ENCODE measurements at regions of chr7 and their contacts with region 1.

Region 1: GRCh38 chr7:87152107-87152844 is at the start of gene DMTF1:
- DNase-seq: peak; percentile 94
- ATAC-seq: peak; percentile 83
- H3K4me3 ChIP-seq: peak within 1 kb of the TSS; percentile 75 to 97 (median 88)
- H3K4me3 Mint-ChIP-seq: peak within 1 kb of the TSS; percentile 88
- H3K27ac ChIP-seq: peak within 1 kb of the TSS; percentile 87 to 99
- H3K27ac Mint-ChIP-seq: peak within 1 kb of the TSS; percentile 91
- H3K4me1 ChIP-seq: peaks cover 27 to 45% of the 10 kb centered on the region in 2 donors
- H3K4me1 Mint-ChIP-seq: peaks cover 46% of the 10 kb centered on the region
- H3K27me3 ChIP-seq: no peaks in the 10 kb centered on the region
- H3K27me3 Mint-ChIP-seq: no peaks in the 10 kb centered on the region
- CTCF ChIP-seq: no peak
- total RNA-seq, gene DMTF1: 235 and 264 TPM in 2 replicates

Region 2: DNA sequence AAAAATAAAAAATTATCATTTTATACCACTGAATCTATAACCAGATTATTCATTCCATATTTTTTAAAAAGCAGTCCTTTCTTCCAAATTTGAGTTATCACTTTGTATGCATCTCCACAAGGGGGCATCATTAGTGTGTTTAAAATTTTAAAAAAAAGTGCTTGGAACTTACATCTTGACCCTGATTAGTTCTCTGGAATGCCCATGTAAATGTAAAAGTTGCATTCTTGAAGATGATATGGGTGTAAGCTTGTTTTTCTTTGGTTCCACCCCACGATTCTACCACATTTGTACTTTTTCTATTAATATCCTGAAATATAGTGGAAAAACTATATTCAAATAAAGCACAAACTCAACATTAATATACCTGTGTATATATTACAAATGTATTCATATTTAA is 237.7 kb before region 1 on chr7:
- CTCF ChIA-PET with region 1: interaction called, 12 read pairs
- POLR2A ChIA-PET with region 1: no interaction called
- intact Hi-C with region 1: no loop called
- DNase-seq: peak; percentile 17
- ATAC-seq: no peak
- H3K4me3 ChIP-seq: no peak overlapping the region
- H3K4me3 Mint-ChIP-seq: no peak overlapping the region
- H3K27ac ChIP-seq: no peak overlapping the region
- H3K27ac Mint-ChIP-seq: no peak overlapping the region
- H3K4me1 ChIP-seq: no peaks in the 10 kb centered on the region
- H3K4me1 Mint-ChIP-seq: no peaks in the 10 kb centered on the region
- H3K27me3 ChIP-seq: no peaks in the 10 kb centered on the region
- H3K27me3 Mint-ChIP-seq: no peaks in the 10 kb centered on the region
- CTCF ChIP-seq: peak; percentile 74

Region 3: GRCh38 chr7:86932038-86932512 is 220.2 kb before region 1 on chr7:
- CTCF ChIA-PET with region 1: interaction called, 60 read pairs
- POLR2A ChIA-PET with region 1: no interaction called
- intact Hi-C with region 1: no loop called
- DNase-seq: no peak
- ATAC-seq: no peak
- H3K4me3 ChIP-seq: no peak overlapping the region
- H3K4me3 Mint-ChIP-seq: no peak overlapping the region
- H3K27ac ChIP-seq: no peak overlapping the region
- H3K27ac Mint-ChIP-seq: no peak overlapping the region
- H3K4me1 ChIP-seq: peaks cover 4 to 6% of the 10 kb centered on the region in 2 donors
- H3K4me1 Mint-ChIP-seq: peaks cover 8% of the 10 kb centered on the region
- H3K27me3 ChIP-seq: no peaks in the 10 kb centered on the region
- H3K27me3 Mint-ChIP-seq: no peaks in the 10 kb centered on the region
- CTCF ChIP-seq: no peak

Region 4: DNA sequence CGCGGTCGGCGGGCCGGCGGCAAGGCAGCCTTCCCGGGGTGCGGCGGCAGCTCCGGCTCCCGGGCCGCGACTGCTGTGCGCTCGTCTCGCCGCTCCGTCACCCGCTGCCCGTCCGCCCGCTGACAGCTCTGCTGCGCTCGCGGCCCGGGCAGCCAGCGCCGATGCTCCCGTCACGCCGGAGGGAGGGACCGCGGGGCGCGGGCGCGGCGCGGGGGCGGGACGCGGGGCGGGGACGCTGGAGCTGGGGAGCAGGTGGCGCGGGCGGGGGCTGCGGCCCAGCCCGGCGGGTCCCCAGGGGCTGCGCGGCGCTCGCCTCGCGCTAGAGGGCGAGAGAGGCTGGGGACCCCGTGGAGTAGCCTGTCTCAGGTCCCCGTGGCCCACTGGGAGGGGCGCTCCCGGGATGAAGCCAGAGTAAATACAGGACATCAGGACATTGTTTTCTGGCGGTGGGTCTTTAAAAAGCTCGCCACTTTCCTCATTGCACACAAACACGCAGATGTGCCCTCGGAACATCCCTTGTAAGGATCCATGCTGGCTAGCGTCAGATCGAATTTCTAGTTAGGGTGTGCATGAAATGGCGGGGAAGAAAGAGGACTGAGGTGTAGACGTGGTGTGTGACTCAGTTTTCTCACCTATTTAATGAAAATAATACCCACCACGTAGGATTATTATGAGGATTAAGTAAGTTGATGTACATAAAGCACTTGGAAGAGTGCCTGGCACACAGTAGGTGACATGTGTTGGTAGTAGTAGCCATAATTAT is 92.6 kb before region 1 on chr7 and contains the start of gene ELAPOR2:
- CTCF ChIA-PET with region 1: interaction called, 13 read pairs
- POLR2A ChIA-PET with region 1: interaction called, 12 read pairs
- intact Hi-C with region 1: loop called (anchors 2 kb)
- DNase-seq: peak; percentile 91
- ATAC-seq: peak; percentile 95
- H3K4me3 ChIP-seq: peak within 1 kb of the TSS; percentile 42 to 79 (median 66)
- H3K4me3 Mint-ChIP-seq: peak within 1 kb of the TSS; percentile 90
- H3K27ac ChIP-seq: peak within 1 kb of the TSS in 1 of 2 donors; percentile 56
- H3K27ac Mint-ChIP-seq: peak within 1 kb of the TSS; percentile 77
- H3K4me1 ChIP-seq: peaks cover 12 to 14% of the 10 kb centered on the region in 2 donors
- H3K4me1 Mint-ChIP-seq: peaks cover 15% of the 10 kb centered on the region
- H3K27me3 ChIP-seq: peaks cover 0 to 3% (median 0%) of the 10 kb centered on the region in 4 experiments
- H3K27me3 Mint-ChIP-seq: no peaks in the 10 kb centered on the region
- CTCF ChIP-seq: peak; percentile 67
- total RNA-seq, gene ELAPOR2: 8.3 and 11.1 TPM in 2 replicates

Region 5: DNA sequence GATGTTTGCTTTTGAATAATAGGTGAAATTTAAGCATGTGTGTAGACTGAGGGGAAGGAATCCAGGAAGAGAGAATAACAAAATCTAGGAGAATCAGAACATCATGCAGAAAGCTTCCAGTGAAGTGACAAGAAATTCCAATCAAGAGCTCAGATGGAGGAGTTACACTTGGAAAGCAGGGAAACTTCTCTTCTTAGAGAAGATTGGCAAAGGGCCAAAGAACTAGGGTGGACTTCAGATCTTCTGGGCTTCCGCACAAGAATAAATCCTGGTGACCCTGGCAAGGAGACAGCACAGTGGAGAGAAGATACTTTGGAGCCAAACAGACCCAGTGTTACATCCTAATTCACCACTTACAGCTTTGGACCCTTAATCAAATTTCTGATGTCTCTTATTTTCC is 99.9 kb after region 1 on chr7:
- CTCF ChIA-PET with region 1: no interaction called
- POLR2A ChIA-PET with region 1: no interaction called
- intact Hi-C with region 1: no loop called
- DNase-seq: no peak
- ATAC-seq: no peak
- H3K4me3 ChIP-seq: no peak overlapping the region
- H3K4me3 Mint-ChIP-seq: no peak overlapping the region
- H3K27ac ChIP-seq: no peak overlapping the region
- H3K27ac Mint-ChIP-seq: no peak overlapping the region
- H3K4me1 ChIP-seq: no peaks in the 10 kb centered on the region
- H3K4me1 Mint-ChIP-seq: no peaks in the 10 kb centered on the region
- H3K27me3 ChIP-seq: peaks cover 0 to 9% (median 3%) of the 10 kb centered on the region in 4 experiments
- H3K27me3 Mint-ChIP-seq: peaks cover 39% of the 10 kb centered on the region
- CTCF ChIP-seq: no peak

Region 6: DNA sequence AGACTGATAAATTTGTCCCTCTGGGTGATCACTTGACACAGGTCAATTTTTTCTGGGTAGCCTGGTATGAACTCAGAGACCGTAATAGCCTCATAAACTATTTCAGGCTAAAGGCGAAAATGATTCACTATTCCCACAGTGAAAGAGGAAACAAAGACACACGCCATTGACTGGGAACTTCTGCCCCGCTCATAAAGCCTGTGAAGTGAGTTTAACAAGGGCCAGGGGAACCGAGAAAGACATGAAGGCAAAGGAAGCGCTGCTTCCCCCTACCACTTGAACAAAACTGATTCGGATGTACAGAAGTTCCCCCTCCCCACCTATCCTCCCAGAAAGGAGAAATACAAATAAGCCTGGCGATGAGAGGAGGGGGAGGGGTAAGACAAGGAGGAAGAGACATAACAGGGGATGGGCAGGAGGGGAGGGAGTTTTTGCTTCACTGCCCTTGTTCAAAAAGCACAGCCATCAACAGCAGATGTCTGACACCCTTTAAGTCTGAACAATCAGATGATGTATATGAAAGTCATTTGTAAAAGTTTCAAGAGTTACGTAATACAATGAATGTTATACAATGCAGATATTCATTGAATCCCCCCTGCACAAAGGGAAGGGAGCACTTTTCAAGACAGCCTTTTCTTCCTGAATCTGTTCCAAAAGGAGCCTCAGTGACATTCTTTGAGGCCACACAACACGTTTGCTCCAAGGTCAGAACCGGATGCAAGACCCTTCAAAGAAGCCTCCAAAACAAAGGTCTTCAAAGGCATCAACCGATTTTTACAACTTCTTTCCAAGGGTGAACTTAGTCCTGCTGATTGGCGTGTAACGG is 322.5 kb after region 1 on chr7:
- CTCF ChIA-PET with region 1: no interaction called
- POLR2A ChIA-PET with region 1: no interaction called
- intact Hi-C with region 1: loop called (anchors 10 kb)
- DNase-seq: peak; percentile 89
- ATAC-seq: peak; percentile 68
- H3K4me3 ChIP-seq: peak overlapping the region; percentile 54 to 87 (median 73)
- H3K4me3 Mint-ChIP-seq: peak overlapping the region; percentile 93
- H3K27ac ChIP-seq: peak overlapping the region; percentile 87 to 92
- H3K27ac Mint-ChIP-seq: peak overlapping the region; percentile 97
- H3K4me1 ChIP-seq: peaks cover 29 to 42% of the 10 kb centered on the region in 2 donors
- H3K4me1 Mint-ChIP-seq: peaks cover 46% of the 10 kb centered on the region
- H3K27me3 ChIP-seq: no peaks in the 10 kb centered on the region
- H3K27me3 Mint-ChIP-seq: no peaks in the 10 kb centered on the region
- CTCF ChIP-seq: no peak

Region 7: GRCh38 chr7:88219781-88220747 is 1067.8 kb after region 1 on chr7 and contains the start of gene SRI:
- CTCF ChIA-PET with region 1: no interaction called
- POLR2A ChIA-PET with region 1: no interaction called
- intact Hi-C with region 1: loop called (anchors 5 kb)
- DNase-seq: peak; percentile 94
- ATAC-seq: peak; percentile 96
- H3K4me3 ChIP-seq: peak within 1 kb of the TSS; percentile 83 to 91 (median 88)
- H3K4me3 Mint-ChIP-seq: peak within 1 kb of the TSS; percentile 94
- H3K27ac ChIP-seq: peak within 1 kb of the TSS; percentile 68 to 78
- H3K27ac Mint-ChIP-seq: peak within 1 kb of the TSS; percentile 95
- H3K4me1 ChIP-seq: peaks cover 13 to 25% of the 10 kb centered on the region in 2 donors
- H3K4me1 Mint-ChIP-seq: peaks cover 27% of the 10 kb centered on the region
- H3K27me3 ChIP-seq: no peaks in the 10 kb centered on the region
- H3K27me3 Mint-ChIP-seq: no peaks in the 10 kb centered on the region
- CTCF ChIP-seq: peak; percentile 98
- total RNA-seq, gene SRI: 46.9 and 49.9 TPM in 2 replicates